Thyroid gland (tissue), 4 donors: ENCODE measurements at regions of chr18 and their contacts with region 1.

Region 1: GRCh38 chr18:48445540-48445939 is 36.4 kb upstream of the ZBTB7C start:
- DNase-seq: peak; percentile 77 to 80
- H3K4me3 ChIP-seq: no peak overlapping the region
- H3K27ac ChIP-seq: no peak overlapping the region
- H3K4me1 ChIP-seq: peaks cover 10 to 32% of the 10 kb centered on the region in 2 donors
- H3K27me3 ChIP-seq: no peaks in the 10 kb centered on the region
- CTCF ChIP-seq: peak; percentile 72 to 92 (median 76)
- POLR2A ChIP-seq: no peak

Region 2: GRCh38 chr18:48022531-48023329 is 422.8 kb before region 1 on chr18:
- intact Hi-C with region 1: loop called (anchors 5 kb)
- DNase-seq: no peak
- H3K4me3 ChIP-seq: no peak overlapping the region
- H3K27ac ChIP-seq: no peak overlapping the region
- H3K4me1 ChIP-seq: peaks cover 32 to 48% of the 10 kb centered on the region in 2 donors
- H3K27me3 ChIP-seq: no peaks in the 10 kb centered on the region
- CTCF ChIP-seq: peak in 5 of 6 experiments; percentile 24 to 63 (median 58)
- POLR2A ChIP-seq: no peak

Region 3: DNA sequence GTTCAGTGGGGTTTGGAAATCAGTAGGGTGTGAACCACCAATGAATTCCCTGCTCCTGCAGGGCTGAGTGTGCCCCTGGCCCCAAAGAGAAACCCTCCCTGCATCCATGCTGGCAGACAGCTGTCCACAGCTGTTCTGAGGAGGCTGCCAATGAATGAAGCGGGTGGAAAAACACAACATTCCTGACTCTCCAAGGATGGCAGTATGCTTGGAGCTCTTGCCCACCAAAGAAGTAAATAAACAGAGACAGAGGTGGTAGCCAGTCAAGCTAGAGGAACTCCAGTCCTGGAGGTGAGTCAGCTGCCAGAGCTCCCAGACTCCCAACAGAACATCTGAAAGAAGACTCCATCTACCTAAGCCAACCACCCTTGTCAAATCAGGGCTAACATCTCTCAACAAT is 42.6 kb before region 1 on chr18:
- intact Hi-C with region 1: no loop called
- DNase-seq: peak; percentile 46 to 63
- H3K4me3 ChIP-seq: no peak overlapping the region
- H3K27ac ChIP-seq: peak overlapping the region; percentile 84 to 90 (median 86)
- H3K4me1 ChIP-seq: peaks cover 71 to 93% of the 10 kb centered on the region in 2 donors
- H3K27me3 ChIP-seq: no peaks in the 10 kb centered on the region
- CTCF ChIP-seq: no peak
- POLR2A ChIP-seq: peak in 1 of 2 donors; percentile 41

Region 4: DNA sequence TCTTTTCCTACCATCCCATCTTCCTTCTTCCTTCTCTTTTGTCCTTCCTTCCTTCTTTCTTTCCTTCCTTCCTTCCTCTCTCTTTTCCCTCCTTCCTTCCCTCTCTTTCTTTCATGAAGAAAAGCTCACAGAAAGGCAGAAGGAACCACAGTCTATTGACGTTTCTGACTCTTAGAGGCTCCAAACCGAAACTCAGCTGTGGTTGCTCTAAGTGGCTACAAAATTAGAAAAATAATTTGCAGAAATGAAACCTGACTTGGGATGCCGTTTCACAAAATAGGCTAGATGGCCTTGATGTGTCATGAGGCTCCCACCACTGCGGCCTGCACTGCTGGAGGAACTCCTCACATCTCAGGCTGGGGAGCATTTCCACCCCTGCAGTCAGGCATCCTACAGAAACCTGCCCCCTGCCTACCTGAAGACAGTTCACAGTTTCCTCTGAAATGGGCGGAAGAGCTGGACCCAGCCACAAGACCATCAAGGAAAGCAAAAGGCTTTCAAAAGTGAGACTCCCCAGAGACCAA is 339.6 kb after region 1 on chr18:
- intact Hi-C with region 1: no loop called
- DNase-seq: peak in 1 of 2 donors; percentile 2
- H3K4me3 ChIP-seq: no peak overlapping the region
- H3K27ac ChIP-seq: no peak overlapping the region
- H3K4me1 ChIP-seq: peaks cover 32 to 56% of the 10 kb centered on the region in 2 donors
- H3K27me3 ChIP-seq: no peaks in the 10 kb centered on the region
- CTCF ChIP-seq: no peak
- POLR2A ChIP-seq: no peak